ENCODE measurements at regions of chr1 and their contacts with region 1.

Region 1: GRCh38 chr1:101309334-101310311 is 72.8 kb downstream of the S1PR1 start:
- DNase-seq: peak; percentile 44
- H3K4me3 Mint-ChIP-seq: peak overlapping the region; percentile 64
- H3K27ac Mint-ChIP-seq: no peak overlapping the region
- H3K4me1 Mint-ChIP-seq: no peaks in the 10 kb centered on the region
- H3K27me3 Mint-ChIP-seq: peaks cover 70% of the 10 kb centered on the region
- CTCF ChIP-seq: peak; percentile 63

Region 2: GRCh38 chr1:101346419-101346818 is 36.8 kb after region 1 on chr1:
- CTCF ChIA-PET with region 1: no interaction called
- intact Hi-C with region 1: no loop called
- DNase-seq: no peak
- H3K4me3 Mint-ChIP-seq: no peak overlapping the region
- H3K27ac Mint-ChIP-seq: no peak overlapping the region
- H3K4me1 Mint-ChIP-seq: no peaks in the 10 kb centered on the region
- H3K27me3 Mint-ChIP-seq: peaks cover 12% of the 10 kb centered on the region
- CTCF ChIP-seq: no peak

Region 3: GRCh38 chr1:101357444-101357986 is 47.9 kb after region 1 on chr1:
- CTCF ChIA-PET with region 1: interaction called, 58 read pairs
- intact Hi-C with region 1: loop called (anchors 1 kb)
- DNase-seq: peak; percentile 61
- H3K4me3 Mint-ChIP-seq: no peak overlapping the region
- H3K27ac Mint-ChIP-seq: no peak overlapping the region
- H3K4me1 Mint-ChIP-seq: no peaks in the 10 kb centered on the region
- H3K27me3 Mint-ChIP-seq: peaks cover 32% of the 10 kb centered on the region
- CTCF ChIP-seq: peak; percentile 56

Region 4: GRCh38 chr1:101438359-101438758 is 128.7 kb after region 1 on chr1:
- CTCF ChIA-PET with region 1: interaction called, 6 read pairs
- intact Hi-C with region 1: loop called (anchors 2 kb)
- DNase-seq: peak; percentile 1
- H3K4me3 Mint-ChIP-seq: no peak overlapping the region
- H3K27ac Mint-ChIP-seq: no peak overlapping the region
- H3K4me1 Mint-ChIP-seq: no peaks in the 10 kb centered on the region
- H3K27me3 Mint-ChIP-seq: peaks cover 23% of the 10 kb centered on the region
- CTCF ChIP-seq: no peak

Measured in Calu3 (cell line).